Lower leg skin (tissue), 4 donors: ENCODE measurements at regions of chr2 and their contacts with region 1.

Region 1: GRCh38 chr2:178173662-178174061 is 20.6 kb upstream of the OSBPL6 start:
- DNase-seq: no peak
- H3K4me3 ChIP-seq: no peak overlapping the region
- CTCF ChIP-seq: no peak
- POLR2A ChIP-seq: no peak

Region 2: DNA sequence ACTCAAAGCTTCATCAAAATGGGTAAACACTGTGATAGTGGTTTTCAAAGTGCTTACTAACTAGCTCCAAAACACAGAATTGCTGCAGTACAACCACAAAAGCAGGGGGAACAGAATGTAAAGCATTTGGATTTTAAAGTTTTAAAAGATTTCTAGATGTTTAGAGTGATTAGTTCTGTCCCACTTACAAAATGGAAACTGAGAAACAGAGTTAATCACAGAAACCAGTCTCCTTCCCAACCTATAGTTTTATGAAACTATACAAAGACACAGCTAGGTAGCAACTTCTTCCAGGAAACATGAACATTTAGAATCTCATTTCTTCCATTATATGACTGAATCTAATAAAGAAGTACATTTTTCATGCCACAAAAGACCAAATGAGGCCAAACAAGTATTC is 1034.8 kb before region 1 on chr2:
- intact Hi-C with region 1: loop called (anchors 5 kb)
- DNase-seq: no peak
- H3K4me3 ChIP-seq: no peak overlapping the region
- CTCF ChIP-seq: no peak
- POLR2A ChIP-seq: no peak

Region 3: DNA sequence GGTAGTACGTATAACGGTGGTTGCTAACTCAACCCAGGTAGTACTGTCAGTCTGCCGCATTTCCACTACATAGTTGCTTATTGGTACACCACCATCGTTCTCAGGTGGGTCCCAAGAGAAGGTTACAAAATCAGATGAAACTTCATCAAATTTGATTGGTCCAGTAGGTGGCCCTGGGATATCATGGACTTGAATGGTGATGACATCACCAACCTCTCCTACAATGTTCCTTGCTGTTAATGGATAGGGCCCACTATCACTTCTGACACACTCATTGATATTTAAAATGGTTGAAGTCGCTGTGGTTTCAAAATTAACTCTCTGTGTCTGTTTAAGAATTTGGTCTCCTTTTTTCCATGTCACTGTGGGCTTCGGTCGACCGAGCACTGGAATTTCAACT is 401.1 kb after region 1 on chr2:
- intact Hi-C with region 1: no loop called
- DNase-seq: no peak
- H3K4me3 ChIP-seq: no peak overlapping the region
- CTCF ChIP-seq: no peak
- POLR2A ChIP-seq: no peak